ENCODE measurements at regions of chr11 and their contacts with region 1.

Region 1: DNA sequence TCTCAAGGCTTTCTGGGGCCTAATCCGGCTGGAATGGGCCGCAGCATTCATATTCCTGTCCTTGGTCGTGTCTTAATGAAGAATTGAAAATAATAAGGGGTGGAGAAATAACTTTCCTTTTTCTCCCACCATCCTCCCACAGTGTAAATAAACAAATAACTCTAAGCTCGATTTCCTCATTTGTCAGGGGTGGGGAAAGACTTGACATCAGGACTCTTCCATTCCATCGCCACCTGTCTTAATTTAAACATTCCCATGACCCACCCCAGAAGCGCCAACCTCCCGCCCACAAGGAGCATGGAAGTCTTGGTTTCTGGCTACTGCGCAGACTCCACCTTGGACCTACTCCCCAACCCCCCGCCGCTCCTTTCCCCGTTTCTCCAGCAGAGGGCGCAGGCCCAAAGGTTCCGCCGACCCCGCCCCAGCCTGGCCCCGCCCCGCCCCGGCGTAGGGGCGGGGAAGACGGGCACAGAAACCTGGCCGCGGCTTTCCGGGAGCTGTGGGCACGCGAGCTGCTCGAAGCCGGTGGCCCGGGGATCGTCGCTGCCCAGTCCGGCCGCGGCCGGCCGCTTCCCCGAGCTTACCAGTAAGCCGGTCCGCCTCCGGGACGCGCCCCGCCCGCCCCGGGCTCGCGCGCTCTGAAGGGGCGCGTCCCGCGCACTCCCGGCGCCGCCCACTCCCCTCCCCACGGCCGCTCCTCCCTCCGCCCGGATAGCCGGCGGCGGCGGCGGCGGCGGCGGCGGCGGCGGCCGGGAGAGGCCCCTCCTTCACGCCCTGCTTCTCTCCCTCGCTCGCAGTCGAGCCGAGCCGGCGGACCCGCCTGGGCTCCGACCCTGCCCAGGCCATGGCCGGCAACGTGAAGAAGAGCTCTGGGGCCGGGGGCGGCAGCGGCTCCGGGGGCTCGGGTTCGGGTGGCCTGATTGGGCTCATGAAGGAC is at the start of gene CBL:
- DNase-seq: peak; percentile 88 to 99 (median 96)

Region 2: DNA sequence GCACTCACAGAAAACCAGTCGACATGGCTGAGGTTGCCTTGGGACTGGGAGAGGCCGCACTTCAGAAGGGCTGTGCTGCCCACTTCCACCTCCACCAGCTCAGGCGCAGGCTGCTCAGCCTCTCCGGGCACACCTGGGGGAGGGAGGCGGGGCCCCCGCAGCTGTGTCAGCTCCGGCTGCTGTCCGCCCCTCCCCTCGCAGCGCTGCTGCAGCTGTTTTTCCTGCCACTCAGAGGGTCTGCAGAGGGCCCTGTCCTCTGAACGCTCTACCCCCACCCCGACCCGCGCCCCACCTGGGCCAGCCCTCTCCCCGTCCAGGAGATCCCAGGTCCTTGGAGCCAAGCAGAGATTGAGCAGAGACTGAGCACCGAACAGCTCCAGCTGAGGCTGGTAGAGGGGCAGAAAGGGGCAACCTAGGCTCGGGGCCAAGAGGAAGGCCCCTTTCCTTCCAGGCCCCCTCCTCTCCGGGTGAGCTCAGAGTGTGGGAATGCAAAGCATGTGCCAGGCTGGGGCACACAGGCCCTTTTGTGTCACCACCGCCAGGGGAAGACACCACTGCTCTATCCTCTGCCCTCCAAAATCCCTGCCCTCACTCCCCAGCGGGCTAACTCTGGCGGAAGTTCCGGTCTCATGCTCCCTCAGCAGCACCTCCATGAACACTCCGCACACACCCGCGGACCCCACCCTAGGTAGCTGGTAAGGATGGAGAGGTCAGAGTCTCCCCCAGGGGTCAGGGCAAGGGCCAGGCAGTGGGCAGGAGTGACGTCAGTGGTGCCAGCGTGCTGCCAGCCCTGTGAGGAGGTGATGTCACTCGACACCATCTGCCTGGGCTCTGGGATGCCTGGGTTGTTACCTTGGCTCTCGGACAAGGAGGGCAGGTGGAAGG is 109.5 kb after region 1 on chr11:
- intact Hi-C with region 1: loop called (anchors 5 kb)
- DNase-seq: peak; percentile 56 to 91 (median 75)

Region 3: GRCh38 chr11:119550053-119550752 is 344.4 kb after region 1 on chr11:
- intact Hi-C with region 1: no loop called
- DNase-seq: no peak